ENCODE measurements at regions of chr6 and their contacts with region 1.

Region 1: DNA sequence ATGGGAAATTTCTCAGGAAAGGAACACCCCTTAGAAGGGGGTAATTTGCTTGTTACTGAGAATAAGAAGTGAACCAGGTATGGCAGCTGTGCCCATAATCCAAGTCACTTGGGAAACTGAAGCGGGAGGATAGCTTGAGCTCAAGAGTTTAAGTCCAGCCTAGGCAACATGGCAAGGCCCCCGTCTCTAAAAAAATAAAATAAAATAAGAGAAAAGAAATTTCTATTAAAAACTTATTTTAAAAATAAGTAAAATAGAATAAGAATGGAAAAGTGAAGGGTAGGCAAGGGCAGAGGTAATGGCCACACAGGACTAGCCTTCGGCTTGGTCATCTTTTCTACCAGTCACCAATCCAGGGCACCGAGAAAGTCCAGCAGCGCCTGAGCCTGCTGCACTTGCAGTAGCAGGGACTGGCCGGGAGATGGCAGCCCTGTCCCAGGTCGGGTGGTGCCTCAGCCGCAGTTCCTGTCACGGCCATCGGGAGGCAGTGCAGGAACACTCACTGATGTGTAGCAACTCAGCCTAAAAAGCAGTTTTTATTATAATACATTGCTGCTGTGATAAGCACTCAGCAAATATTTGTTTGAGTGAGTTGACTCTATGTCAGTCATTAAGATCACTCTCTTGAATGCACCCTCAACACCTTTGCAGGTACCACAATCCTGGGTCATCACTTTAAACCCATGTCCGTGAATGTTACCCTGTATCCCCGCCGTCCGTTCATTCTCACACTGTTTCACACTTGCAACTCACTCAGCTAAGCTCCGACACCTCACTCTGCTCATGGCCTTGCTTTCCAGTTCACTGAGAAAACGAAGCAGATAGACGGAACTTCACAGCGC is 23.2 kb upstream of the GCM1 start:
- DNase-seq: peak; percentile 37
- ATAC-seq: peak; percentile 90
- H3K4me3 ChIP-seq: no peak overlapping the region
- H3K27ac ChIP-seq: no peak overlapping the region
- H3K4me1 ChIP-seq: no peaks in the 10 kb centered on the region
- H3K27me3 ChIP-seq: no peaks in the 10 kb centered on the region
- CTCF ChIP-seq: peak; percentile 97 to 100 (median 100)
- EP300 ChIP-seq: no peak
- POLR2A ChIP-seq: no peak
- RAD21 ChIP-seq: peak; percentile 100

Region 2: GRCh38 chr6:53189554-53189953 is 17.7 kb after region 1 on chr6:
- CTCF ChIA-PET with region 1: interaction called, 6 read pairs
- POLR2A ChIA-PET with region 1: no interaction called
- RAD21 ChIA-PET with region 1: interaction called, 8 read pairs
- SMC1A ChIA-PET with region 1: interaction called, 23 read pairs
- in situ Hi-C with region 1: no loop called
- intact Hi-C with region 1: no loop called
- DNase-seq: no peak
- ATAC-seq: peak; percentile 20; the same call in 2 of the 3 replicates
- H3K4me3 ChIP-seq: no peak overlapping the region
- H3K27ac ChIP-seq: no peak overlapping the region
- H3K4me1 ChIP-seq: no peaks in the 10 kb centered on the region; the same call in 1 of the 2 replicates
- H3K27me3 ChIP-seq: no peaks in the 10 kb centered on the region
- CTCF ChIP-seq: no peak
- EP300 ChIP-seq: no peak
- POLR2A ChIP-seq: no peak
- RAD21 ChIP-seq: no peak

Region 3: DNA sequence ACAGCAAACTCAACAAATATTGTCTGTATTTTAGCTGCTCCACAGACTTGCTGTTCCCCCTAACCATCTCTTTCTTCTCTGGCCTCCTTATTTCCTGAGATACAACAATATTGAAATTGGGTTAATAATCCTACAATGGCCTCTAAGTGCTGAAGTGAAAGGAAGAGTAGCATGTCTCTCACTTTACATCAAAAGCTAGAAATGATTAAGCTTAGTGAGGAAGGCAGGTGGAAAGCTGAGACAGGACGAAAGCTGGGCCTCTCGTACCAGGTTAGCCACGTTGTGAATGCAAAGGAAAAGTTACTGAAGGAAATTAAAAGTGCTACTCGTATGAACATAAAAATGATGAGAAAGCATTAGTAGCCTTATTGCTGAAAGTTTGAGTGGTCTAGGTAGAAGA is 113.1 kb after region 1 on chr6:
- CTCF ChIA-PET with region 1: interaction called, 12 read pairs
- POLR2A ChIA-PET with region 1: no interaction called
- RAD21 ChIA-PET with region 1: interaction called, 12 read pairs
- SMC1A ChIA-PET with region 1: interaction called, 12 read pairs
- in situ Hi-C with region 1: loop called (anchors 5 kb)
- intact Hi-C with region 1: loop called (anchors 5 kb)
- DNase-seq: no peak
- ATAC-seq: peak; percentile 76
- H3K4me3 ChIP-seq: no peak overlapping the region
- H3K27ac ChIP-seq: no peak overlapping the region
- H3K4me1 ChIP-seq: peaks cover 28% of the 10 kb centered on the region
- H3K27me3 ChIP-seq: no peaks in the 10 kb centered on the region
- CTCF ChIP-seq: no peak
- EP300 ChIP-seq: peak in 1 of 2 experiments; percentile 33; a peak in 1 of 4 replicates
- POLR2A ChIP-seq: no peak
- RAD21 ChIP-seq: no peak

Region 4: GRCh38 chr6:53342217-53342616 is 170.4 kb after region 1 on chr6:
- CTCF ChIA-PET with region 1: interaction called, 22 read pairs
- POLR2A ChIA-PET with region 1: interaction called, 3 read pairs
- RAD21 ChIA-PET with region 1: interaction called, 11 read pairs
- SMC1A ChIA-PET with region 1: interaction called, 9 read pairs
- in situ Hi-C with region 1: no loop called
- intact Hi-C with region 1: no loop called
- DNase-seq: no peak
- ATAC-seq: peak; percentile 28
- H3K4me3 ChIP-seq: peak overlapping the region; percentile 5; the same call in 1 of the 2 replicates
- H3K27ac ChIP-seq: no peak overlapping the region
- H3K4me1 ChIP-seq: peaks cover 23% of the 10 kb centered on the region
- H3K27me3 ChIP-seq: no peaks in the 10 kb centered on the region
- CTCF ChIP-seq: no peak
- EP300 ChIP-seq: no peak
- POLR2A ChIP-seq: no peak
- RAD21 ChIP-seq: no peak

Region 5: GRCh38 chr6:53426667-53427270 is 254.9 kb after region 1 on chr6:
- CTCF ChIA-PET with region 1: interaction called, 225 read pairs
- POLR2A ChIA-PET with region 1: interaction called, 4 read pairs
- RAD21 ChIA-PET with region 1: interaction called, 13 read pairs
- SMC1A ChIA-PET with region 1: interaction called, 44 read pairs
- in situ Hi-C with region 1: no loop called
- intact Hi-C with region 1: no loop called
- DNase-seq: peak; percentile 74
- ATAC-seq: peak; percentile 90
- H3K4me3 ChIP-seq: no peak overlapping the region
- H3K27ac ChIP-seq: no peak overlapping the region
- H3K4me1 ChIP-seq: peaks cover 4% of the 10 kb centered on the region; the same call in 1 of the 2 replicates
- H3K27me3 ChIP-seq: 0 out of 4 replicates have a peak, but pooled peaks cover 0 to 7% of the 10 kb centered on the region in 2 experiments
- CTCF ChIP-seq: no peak
- EP300 ChIP-seq: peak; percentile 65 to 90; a peak in 3 of 4 replicates
- POLR2A ChIP-seq: no peak
- RAD21 ChIP-seq: no peak

Region 6: DNA sequence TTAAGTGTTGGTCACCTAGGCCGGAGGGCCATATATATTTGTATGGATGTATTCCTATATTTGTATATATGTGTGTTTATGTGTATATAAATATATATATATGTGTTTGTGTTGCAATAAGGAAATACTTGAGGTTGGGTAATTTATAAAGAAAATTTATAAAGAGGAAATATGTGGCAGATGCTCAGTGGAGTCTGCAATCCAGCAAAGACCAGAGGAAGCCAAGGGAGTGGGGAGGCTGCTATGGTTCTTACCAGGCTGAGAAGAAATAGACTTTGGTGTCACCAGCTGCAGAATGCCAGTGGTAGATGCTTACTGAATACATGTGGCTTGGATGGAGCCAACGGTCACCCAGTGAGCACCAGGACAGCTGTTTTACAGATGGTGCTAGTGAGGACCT is 274.3 kb after region 1 on chr6:
- CTCF ChIA-PET with region 1: interaction called, 225 read pairs
- POLR2A ChIA-PET with region 1: no interaction called
- RAD21 ChIA-PET with region 1: interaction called, 9 read pairs
- SMC1A ChIA-PET with region 1: interaction called, 110 read pairs
- in situ Hi-C with region 1: no loop called
- intact Hi-C with region 1: no loop called
- DNase-seq: no peak
- ATAC-seq: no peak
- H3K4me3 ChIP-seq: no peak overlapping the region
- H3K27ac ChIP-seq: no peak overlapping the region
- H3K4me1 ChIP-seq: no peaks in the 10 kb centered on the region
- H3K27me3 ChIP-seq: peaks cover 0 to 8% of the 10 kb centered on the region in 2 experiments; a peak in 1 of 4 replicates
- CTCF ChIP-seq: no peak
- EP300 ChIP-seq: no peak
- POLR2A ChIP-seq: no peak
- RAD21 ChIP-seq: no peak

Region 7: DNA sequence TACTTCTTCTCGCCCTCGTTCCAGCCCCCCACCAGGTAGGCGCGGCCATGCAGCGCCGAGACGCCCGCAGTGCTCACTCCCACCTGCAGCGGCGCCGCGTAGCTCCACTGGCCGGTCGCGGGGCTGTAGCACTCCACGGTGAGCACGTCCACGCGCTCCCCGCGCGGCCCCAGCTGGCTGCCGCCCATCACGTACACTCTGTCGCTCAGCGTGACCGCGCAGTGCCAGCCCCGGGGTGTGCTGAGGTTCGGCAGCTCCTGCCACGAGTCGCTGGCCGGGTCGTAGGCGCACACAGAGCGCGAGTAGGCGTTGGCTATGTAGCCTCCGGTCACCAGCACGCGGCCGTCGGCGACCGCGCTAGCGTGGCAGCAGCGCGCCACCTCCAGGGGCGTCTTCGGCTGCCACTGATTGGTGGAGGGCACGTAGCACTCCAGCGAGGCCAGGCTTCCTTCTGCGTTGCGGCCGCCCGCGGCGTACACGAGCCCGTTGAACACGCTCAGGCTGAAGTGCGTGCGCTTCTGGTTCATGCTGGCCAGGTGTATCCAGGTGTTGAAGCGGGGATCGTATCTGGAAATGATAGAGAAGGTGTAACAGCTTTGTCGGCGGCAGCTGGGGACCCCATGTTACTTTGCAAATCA is 480.1 kb after region 1 on chr6:
- CTCF ChIA-PET with region 1: interaction called, 4 read pairs
- POLR2A ChIA-PET with region 1: no interaction called
- RAD21 ChIA-PET with region 1: interaction called, 5 read pairs
- SMC1A ChIA-PET with region 1: no interaction called
- in situ Hi-C with region 1: loop called (anchors 5 kb)
- intact Hi-C with region 1: loop called (anchors 10 kb)
- DNase-seq: no peak
- ATAC-seq: peak; percentile 90
- H3K4me3 ChIP-seq: peak overlapping the region; percentile 57; the same call in 1 of the 2 replicates
- H3K27ac ChIP-seq: no peak overlapping the region
- H3K4me1 ChIP-seq: peaks cover 8% of the 10 kb centered on the region
- H3K27me3 ChIP-seq: peaks cover 9 to 16% of the 10 kb centered on the region in 2 experiments
- CTCF ChIP-seq: peak in 1 of 3 experiments; percentile 1; a peak in 2 of 6 replicates
- EP300 ChIP-seq: no peak
- POLR2A ChIP-seq: no peak
- RAD21 ChIP-seq: no peak